MCF 10A (cell line): ENCODE measurements at regions of chr2 and their contacts with region 1.

Region 1: GRCh38 chr2:88659538-88659916 is 31.9 kb upstream of the RPIA start:
- DNase-seq: peak; percentile 71
- H3K4me3 Mint-ChIP-seq: peak overlapping the region; percentile 21
- H3K27ac Mint-ChIP-seq: peak overlapping the region; percentile 86
- H3K4me1 Mint-ChIP-seq: peaks cover 21% of the 10 kb centered on the region
- H3K27me3 Mint-ChIP-seq: no peaks in the 10 kb centered on the region
- CTCF ChIP-seq: no peak

Region 2: DNA sequence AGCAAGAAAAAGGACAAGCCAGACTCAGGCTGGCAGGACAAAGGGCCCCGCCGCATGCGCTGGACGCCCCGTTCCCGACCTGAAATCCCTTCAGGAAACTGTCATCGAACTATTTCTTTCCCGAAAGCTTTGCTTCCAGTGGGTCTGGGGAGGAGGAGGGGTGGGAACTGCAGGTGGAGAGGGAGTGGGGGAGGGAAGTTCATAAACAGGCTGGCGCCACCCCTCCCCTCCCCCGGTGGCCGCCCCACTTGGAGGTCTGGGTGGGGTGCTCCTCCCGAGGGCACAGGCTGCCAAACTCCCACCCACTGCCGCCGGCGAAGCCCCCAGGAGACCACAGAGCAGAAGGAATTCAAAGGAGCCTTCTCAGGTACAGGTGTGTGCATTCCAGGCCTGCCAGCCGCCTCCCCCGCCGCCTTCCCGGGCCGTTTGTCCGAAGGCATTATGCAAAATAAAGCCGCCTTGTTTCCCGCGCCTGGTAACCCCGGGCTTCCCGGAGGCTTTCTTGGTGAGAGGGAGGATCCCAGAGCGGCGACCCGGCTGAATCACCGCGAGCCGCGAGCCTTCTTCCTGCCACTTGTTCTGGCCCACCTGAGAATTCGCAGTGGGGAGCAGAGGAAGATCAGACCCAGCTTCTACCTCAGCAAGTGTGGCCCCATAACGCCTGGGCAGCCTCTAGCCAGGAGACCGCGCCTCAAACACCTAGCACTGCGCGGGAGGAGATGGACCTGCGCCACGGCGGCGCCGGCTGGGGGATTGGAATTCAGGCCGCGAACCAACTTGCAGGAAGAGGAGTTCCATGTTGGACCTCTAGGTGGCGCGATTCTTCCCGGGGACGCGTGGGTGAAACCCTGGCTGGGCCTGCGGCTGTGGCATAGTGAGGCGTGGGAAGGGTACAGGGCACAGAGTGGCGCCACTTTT is 308.9 kb before region 1 on chr2:
- CTCF ChIA-PET with region 1: no interaction called
- POLR2A ChIA-PET with region 1: no interaction called
- intact Hi-C with region 1: no loop called
- DNase-seq: peak; percentile 70
- H3K4me3 Mint-ChIP-seq: peak overlapping the region; percentile 67
- H3K27ac Mint-ChIP-seq: no peak overlapping the region
- H3K4me1 Mint-ChIP-seq: no peaks in the 10 kb centered on the region
- H3K27me3 Mint-ChIP-seq: peaks cover 18% of the 10 kb centered on the region
- CTCF ChIP-seq: peak; percentile 81

Region 3: DNA sequence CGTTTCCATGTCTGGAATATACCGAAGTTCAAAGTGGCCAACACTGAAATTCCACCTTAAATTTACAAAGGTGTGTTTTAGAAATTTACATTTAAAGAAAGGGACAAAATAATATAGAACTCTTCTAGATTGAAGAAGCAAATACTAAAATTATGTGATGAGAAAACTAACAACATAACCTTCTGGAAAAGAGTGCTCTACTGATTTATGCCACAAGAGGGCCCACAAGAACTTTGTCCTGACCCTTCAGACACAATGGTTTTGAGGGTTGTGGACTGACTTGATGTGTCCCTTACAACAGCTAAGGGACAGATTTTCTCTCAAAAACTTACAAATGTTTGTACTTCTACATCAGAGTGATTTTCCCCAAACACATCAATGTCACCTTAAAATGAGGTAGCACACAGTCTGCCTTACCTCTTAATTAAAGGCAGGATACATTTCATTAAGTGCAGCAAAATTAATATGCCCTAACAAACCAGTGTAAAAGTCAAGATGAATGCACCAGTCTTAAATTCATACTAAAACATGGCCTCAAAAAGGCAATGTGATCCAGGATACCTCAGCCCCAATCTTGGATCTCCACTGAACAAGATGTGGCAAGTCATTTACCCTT is 68.4 kb before region 1 on chr2:
- CTCF ChIA-PET with region 1: interaction called, 424 read pairs
- POLR2A ChIA-PET with region 1: interaction called, 3 read pairs
- intact Hi-C with region 1: no loop called
- DNase-seq: peak; percentile 73
- H3K4me3 Mint-ChIP-seq: no peak overlapping the region
- H3K27ac Mint-ChIP-seq: no peak overlapping the region
- H3K4me1 Mint-ChIP-seq: no peaks in the 10 kb centered on the region
- H3K27me3 Mint-ChIP-seq: no peaks in the 10 kb centered on the region
- CTCF ChIP-seq: peak; percentile 58

Region 4: DNA sequence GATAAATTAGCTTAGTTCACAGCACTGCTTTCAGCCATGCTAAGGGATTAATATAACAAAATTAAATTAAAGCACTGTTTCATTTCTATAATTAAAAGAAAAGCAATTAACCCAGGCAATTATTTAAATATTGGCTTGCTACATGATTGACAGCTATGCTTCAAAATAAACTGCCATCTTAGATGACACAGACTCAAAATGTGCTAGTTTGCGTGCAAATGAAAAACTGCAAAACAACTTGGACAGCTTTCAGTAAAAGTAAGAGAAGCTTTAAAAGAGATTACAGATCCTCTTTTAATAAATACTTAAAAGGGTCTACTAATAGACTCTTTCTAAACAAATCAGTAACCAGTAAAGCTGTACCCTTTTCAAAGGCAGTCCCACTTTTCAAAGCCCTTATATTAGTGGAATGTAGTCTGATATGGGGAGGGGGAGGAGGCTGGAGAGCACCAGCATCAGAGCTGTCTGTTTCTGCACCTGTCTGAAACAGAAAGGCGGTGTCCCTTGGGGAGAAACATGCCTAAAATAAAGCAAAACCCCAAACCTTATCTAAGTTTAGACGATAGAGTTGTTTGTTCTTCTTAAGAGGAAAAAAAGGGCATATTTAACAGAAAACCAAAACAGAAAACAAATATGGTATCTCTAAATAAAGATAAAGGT is 53.0 kb before region 1 on chr2:
- CTCF ChIA-PET with region 1: interaction called, 3 read pairs
- POLR2A ChIA-PET with region 1: interaction called, 27 read pairs
- intact Hi-C with region 1: no loop called
- DNase-seq: no peak
- H3K4me3 Mint-ChIP-seq: no peak overlapping the region
- H3K27ac Mint-ChIP-seq: no peak overlapping the region
- H3K4me1 Mint-ChIP-seq: peaks cover 4% of the 10 kb centered on the region
- H3K27me3 Mint-ChIP-seq: no peaks in the 10 kb centered on the region
- CTCF ChIP-seq: no peak

Region 5: DNA sequence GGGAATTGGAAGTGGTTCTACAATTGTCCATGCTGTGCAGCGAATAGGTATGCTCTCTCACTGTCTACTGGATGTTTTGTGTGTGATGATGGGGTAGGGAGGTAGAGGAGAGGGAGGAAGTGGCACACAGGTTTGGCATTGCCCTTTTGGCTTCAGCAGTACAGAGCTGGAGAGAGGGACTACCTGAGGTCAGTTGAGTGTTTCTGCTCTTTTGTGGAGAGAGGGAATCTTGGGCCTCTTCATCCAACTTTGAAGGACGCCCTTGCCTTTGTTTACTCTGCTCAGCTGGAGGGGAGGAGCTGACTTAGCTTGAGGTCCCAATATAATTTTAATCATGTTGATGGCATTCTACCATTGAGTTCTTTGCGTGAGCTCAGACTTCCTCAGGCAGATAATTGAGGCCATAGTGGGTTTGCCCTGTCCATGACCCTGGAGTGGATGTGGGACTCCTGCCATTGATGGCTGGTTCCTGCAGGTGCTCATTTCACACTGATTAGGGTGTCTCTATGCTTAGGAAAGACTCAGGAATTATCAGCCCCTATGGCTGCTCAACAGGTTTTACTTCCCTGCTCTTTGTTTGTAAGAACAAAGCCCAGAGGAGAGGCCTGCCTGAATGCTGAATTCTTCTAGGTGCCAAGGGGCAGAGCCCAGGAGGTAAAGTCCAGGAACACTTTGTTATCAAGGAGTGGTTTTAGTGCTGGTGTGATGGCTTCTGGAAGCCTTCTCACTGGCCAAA is 39.1 kb after region 1 on chr2:
- CTCF ChIA-PET with region 1: no interaction called
- POLR2A ChIA-PET with region 1: no interaction called
- intact Hi-C with region 1: no loop called
- DNase-seq: no peak
- H3K4me3 Mint-ChIP-seq: no peak overlapping the region
- H3K27ac Mint-ChIP-seq: no peak overlapping the region
- H3K4me1 Mint-ChIP-seq: peaks cover 6% of the 10 kb centered on the region
- H3K27me3 Mint-ChIP-seq: no peaks in the 10 kb centered on the region
- CTCF ChIP-seq: no peak